Activated CD8-positive, alpha-beta T cell treated with anti-CD3 and anti-CD28 coated beads for 36 hours (primary cell): ENCODE measurements at regions of chr15 and their contacts with region 1.

Region 1: GRCh38 chr15:42548253-42549031 is at the starts of genes HAUS2 and LRRC57:
- DNase-seq: peak; percentile 86
- ATAC-seq: peak; percentile 87
- H3K4me3 Mint-ChIP-seq: peak within 1 kb of the TSS; percentile 100
- H3K27ac Mint-ChIP-seq: peak within 1 kb of the TSS; percentile 99
- H3K4me1 Mint-ChIP-seq: peaks cover 43% of the 10 kb centered on the region
- H3K27me3 Mint-ChIP-seq: no peaks in the 10 kb centered on the region
- CTCF ChIP-seq: no peak
- total RNA-seq, gene HAUS2: 45.3 to 48.8 TPM
- total RNA-seq, gene LRRC57: 13.7 to 15.1 TPM

Region 2: DNA sequence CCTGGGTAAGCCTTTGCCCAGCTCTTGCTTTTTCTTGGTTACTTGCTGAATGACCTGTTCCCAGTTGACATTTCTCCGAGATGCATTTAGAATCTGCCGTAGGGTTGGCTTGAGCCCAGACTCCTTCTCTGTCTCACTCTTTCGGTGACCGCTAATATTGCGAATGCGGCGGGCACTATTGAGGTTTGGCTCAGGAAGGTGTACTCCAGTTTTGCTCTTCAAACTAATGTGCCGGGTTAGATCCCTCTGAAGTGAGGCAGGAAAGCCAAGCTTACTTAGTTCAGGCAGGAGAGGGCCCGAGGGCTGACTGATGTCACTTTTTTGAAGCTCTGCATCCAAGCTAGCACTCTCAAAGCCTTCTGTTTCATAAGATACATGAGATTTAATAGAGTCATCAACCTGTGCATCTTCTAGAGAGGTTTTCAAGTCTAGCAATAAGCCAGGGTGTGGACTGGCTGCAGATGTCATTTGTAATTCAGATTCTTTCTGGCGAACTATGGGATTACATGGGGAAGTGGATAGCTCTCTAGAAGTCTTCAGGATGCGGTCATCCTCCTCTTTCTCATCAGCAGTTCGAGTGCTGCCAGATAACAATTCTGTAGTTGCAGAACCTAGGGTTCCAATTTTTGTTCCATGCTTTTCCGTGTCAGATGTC is 98.5 kb before region 1 on chr15:
- CTCF ChIA-PET with region 1: no interaction called
- POLR2A ChIA-PET with region 1: no interaction called
- intact Hi-C with region 1: no loop called
- DNase-seq: no peak
- ATAC-seq: no peak
- H3K4me3 Mint-ChIP-seq: no peak overlapping the region
- H3K27ac Mint-ChIP-seq: no peak overlapping the region
- H3K4me1 Mint-ChIP-seq: peaks cover 2% of the 10 kb centered on the region
- H3K27me3 Mint-ChIP-seq: no peaks in the 10 kb centered on the region
- CTCF ChIP-seq: no peak

Region 3: GRCh38 chr15:42511010-42511396 is 37.4 kb before region 1 on chr15:
- CTCF ChIA-PET with region 1: no interaction called
- POLR2A ChIA-PET with region 1: no interaction called
- intact Hi-C with region 1: no loop called
- DNase-seq: no peak
- ATAC-seq: no peak
- H3K4me3 Mint-ChIP-seq: no peak overlapping the region
- H3K27ac Mint-ChIP-seq: no peak overlapping the region
- H3K4me1 Mint-ChIP-seq: no peaks in the 10 kb centered on the region
- H3K27me3 Mint-ChIP-seq: no peaks in the 10 kb centered on the region
- CTCF ChIP-seq: no peak

Region 4: DNA sequence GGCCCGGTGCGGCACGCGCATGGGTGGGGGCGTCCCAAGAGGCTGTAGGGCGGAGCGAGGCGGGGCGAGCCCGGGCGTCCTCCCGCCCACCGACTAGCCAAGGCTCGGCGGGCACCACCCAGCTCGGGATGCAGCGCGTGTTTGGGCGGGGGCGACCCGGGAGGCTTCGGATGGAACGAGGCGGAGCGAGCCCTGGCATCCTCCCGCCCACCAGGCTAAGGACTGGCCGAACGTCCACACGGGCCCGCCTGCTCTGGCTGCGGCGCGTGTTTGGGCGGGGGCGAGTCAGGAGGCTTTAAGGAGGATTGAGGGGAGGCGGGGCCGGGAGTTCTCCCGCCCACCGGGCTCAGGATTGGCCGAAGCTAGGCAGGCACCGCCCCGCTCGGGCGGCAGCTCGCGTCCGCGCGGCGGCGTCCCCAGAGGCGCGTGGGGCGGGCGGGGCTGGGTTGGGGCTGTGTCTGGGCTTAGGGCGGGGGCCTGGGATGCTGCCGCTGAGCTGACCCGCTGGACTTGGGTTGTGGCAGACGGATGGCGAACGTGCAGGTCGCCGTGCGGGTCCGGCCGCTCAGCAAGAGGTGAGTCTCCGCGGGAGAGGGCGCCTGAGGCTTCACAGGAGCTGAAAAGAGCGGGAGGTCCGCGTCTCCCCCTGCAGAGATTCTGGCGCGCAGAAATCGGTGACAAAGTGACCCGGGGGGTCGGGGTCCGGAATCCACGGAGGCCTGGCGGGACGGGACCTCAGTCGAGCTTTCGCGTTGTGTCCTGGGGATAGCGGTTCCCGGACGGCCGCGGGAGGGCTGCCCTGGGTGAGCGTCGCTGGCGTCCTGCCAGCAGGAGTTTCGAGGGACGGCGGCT is 27.0 kb after region 1 on chr15 and contains the start of gene STARD9:
- CTCF ChIA-PET with region 1: no interaction called
- POLR2A ChIA-PET with region 1: interaction called, 17 read pairs
- intact Hi-C with region 1: no loop called
- DNase-seq: peak; percentile 98
- ATAC-seq: peak; percentile 94
- H3K4me3 Mint-ChIP-seq: peak within 1 kb of the TSS; percentile 93
- H3K27ac Mint-ChIP-seq: peak within 1 kb of the TSS; percentile 89
- H3K4me1 Mint-ChIP-seq: peaks cover 29% of the 10 kb centered on the region
- H3K27me3 Mint-ChIP-seq: no peaks in the 10 kb centered on the region
- CTCF ChIP-seq: no peak
- total RNA-seq, gene STARD9: 4.8 to 6.4 TPM